AG04449 (cell line): ENCODE measurements at regions of chr4 and their contacts with region 1.

Region 1: GRCh38 chr4:153127760-153128494 is 76.3 kb upstream of the TRIM2 start:
- DNase-seq: no peak
- H3K4me3 ChIP-seq: no peak overlapping the region; the same call in 1 of the 2 replicates
- CTCF ChIP-seq: peak; percentile 74

Region 2: GRCh38 chr4:152500800-152501434 is 627.0 kb before region 1 on chr4:
- CTCF ChIA-PET with region 1: interaction called, 22 read pairs
- POLR2A ChIA-PET with region 1: no interaction called
- DNase-seq: peak; percentile 79
- H3K4me3 ChIP-seq: no peak overlapping the region
- CTCF ChIP-seq: peak; percentile 51

Region 3: DNA sequence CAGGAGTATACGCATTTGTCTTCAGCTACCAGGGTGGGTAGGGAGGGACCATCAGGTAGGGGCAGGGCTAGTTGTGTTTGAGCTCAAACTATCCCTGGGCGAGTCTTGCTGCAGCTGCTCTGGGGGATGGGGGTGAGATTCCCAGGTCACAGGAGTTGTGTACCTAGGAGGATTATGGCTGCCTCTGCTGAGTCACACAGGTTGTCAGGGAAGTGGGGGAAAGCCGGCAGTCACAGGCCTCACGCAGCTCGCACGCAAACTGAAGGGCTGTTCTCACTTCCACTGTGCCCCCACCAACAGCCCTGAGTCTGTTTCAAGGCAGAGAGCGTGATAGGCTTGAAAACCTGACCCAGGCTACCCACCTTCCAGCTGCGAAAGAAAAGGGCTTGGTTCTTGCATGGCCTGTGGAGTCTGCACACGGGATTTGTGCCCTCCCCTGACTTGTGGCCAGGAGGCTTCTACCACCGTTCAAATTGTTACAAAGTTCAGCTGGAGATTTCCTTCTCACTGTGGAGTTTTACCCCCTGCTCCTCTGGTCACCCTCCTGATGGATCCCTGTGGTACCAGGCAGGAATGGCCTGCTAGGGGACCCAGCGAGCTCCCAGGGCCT is 284.3 kb before region 1 on chr4:
- CTCF ChIA-PET with region 1: interaction called, 96 read pairs
- POLR2A ChIA-PET with region 1: interaction called, 3 read pairs
- DNase-seq: no peak
- H3K4me3 ChIP-seq: no peak overlapping the region
- CTCF ChIP-seq: no peak

Region 4: GRCh38 chr4:152870606-152871005 is 257.3 kb before region 1 on chr4:
- CTCF ChIA-PET with region 1: interaction called, 11 read pairs
- POLR2A ChIA-PET with region 1: no interaction called
- DNase-seq: no peak
- H3K4me3 ChIP-seq: no peak overlapping the region
- CTCF ChIP-seq: no peak

Region 5: DNA sequence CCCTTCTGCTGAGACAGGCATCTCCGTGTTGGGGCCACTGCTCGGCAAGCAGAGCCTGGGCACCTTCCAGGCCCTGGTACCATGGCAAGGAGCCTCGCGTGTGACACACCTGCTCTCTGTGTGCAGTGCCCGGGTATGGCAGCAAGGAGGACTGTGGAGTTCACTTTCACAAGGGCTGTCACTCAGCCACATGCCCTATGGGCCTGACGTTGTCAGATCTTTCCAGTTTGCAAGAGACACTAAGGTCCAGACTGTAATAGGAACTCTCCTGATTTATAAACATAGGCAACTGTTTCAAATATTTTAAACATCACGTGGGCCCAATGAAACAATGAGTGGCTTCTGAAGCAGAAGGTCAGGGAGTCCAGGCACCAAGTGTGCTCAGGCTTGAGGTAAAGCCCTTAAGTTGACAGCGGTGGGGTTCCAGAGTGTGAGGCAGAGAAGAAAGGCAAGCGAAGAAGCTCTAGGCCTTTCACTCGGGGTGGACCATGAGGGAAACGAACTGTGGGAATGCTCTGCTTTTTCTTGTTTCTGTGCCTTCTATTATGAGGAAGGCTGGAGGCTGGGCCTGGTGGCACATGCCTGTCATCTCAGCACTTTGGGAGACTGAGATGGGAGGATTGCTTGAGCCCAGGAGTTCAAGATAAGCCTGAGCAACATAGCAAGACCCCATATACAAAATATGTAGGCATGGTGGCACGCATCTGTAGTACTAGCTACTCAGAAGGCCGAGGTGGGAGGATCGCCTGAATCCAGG is 32.3 kb before region 1 on chr4:
- CTCF ChIA-PET with region 1: interaction called, 51 read pairs
- POLR2A ChIA-PET with region 1: no interaction called
- DNase-seq: no peak
- H3K4me3 ChIP-seq: no peak overlapping the region
- CTCF ChIP-seq: no peak

Region 6: DNA sequence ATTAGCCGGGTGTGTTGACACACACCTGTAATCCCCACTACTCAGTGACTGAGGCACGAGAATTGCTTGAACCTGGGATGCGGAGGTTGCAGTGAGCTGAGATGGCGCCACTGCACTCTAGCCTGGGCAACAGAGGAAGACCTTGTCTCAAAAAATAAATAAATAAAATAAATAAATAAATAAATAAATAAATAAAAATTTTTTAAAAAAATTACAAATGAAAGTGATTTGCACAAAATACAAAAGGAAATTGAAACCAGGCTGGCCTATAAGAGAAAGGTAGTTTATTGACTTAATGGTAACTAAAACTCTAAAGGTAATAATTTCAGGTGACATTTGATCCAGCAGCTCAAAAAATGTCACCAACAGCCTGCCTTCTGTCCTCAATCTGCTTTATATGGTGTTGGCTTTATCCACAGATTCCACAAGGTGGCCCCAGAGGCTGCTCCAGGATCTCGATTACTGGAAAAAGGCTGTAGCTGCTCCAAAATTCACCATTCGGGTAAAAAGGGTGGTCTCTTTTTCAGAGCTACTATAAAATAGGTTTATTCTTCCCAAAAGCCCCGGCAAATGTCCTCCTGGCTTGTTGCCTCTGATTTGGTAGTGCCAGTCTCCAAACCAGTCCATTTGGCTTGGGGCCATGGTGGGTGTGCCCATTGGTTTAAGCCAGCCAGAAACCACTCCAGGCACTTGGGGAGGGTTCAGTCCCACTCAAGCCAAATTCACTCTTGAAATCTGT is 14.9 kb after region 1 on chr4:
- CTCF ChIA-PET with region 1: interaction called, 23 read pairs
- POLR2A ChIA-PET with region 1: no interaction called
- DNase-seq: no peak
- H3K4me3 ChIP-seq: no peak overlapping the region
- CTCF ChIP-seq: peak; percentile 76

Region 7: DNA sequence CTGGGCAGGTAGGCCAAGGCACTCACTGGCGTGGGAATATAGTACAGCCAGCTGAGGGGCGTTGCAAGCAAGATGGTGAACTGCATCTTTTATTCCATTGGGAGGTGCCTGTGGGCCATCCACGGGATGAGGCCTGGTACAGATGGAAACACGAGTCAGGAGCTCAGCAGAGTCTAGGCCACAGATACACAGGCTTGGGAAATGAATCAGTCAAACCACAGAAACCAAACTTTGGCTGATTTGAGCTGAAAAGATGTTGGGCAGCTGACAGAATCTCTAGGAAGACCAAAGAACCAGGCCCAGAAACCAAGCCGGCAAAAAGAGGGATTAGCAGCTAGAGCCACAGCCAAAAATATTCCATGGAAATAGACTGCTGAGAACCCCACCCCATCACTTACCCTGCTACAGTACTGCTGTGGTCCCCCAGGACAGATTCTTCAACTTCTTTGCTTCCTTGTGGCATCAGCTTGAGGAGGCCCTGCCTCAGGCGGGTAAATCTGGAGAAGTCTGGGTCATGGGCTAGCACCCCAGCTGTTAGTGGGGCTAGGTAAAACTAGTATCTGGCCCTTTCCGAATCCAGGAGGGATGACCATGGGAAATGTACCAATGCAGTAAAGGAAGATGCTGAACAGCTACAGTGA is 413.6 kb after region 1 on chr4:
- CTCF ChIA-PET with region 1: no interaction called
- POLR2A ChIA-PET with region 1: no interaction called
- DNase-seq: peak; percentile 82
- H3K4me3 ChIP-seq: no peak overlapping the region
- CTCF ChIP-seq: peak; percentile 26